Calu3 (cell line): ENCODE measurements at regions of chr17 and their contacts with region 1.

Region 1: DNA sequence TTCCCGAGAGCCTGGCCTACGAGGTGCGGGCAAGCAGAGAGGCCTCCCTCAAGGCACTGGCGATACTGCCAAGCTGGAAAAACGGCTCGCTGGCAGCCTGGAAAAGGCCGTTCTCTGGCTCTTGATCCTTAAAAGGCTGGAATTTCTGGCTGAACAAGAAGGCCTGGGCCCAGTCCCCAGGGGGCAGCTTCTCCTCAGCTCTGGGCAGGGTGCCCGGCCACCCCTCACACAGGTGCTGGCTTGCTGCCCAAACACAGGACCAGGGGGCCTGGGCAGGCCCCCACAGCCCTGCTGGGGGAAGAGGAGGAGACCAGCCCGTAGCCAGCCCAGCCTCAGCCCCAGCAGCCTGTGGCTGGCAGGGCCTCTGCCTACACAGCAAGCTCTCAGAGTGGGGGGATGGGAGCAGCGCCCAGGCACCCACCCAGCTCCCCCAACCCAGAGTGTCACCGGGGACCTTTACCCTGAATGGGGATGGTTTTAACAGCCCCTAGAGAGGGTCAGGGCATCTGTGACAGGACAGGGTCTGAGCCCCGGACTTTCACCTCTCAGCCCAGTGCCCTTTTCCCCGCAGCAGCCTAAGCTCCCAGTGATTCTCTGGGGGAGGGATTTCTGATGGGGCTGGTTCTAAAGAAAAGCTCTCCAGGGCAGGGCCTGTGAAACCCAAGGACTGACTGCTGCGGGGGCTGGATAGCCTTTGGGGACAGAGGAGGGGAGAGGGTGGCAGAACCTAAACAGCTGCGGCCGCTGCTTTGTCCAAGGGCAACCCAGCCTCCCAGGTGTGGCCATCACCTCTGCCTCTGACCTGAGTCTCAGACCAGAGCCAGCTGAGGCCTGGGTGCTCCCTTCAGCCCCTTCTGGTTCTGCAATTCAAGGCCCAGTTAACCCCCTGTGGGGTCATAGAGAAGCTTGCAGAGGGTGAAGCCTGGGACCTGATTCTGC is 38.6 kb upstream of the TOB1 start:
- DNase-seq: peak; percentile 86
- H3K4me3 Mint-ChIP-seq: peak overlapping the region; percentile 38
- H3K27ac Mint-ChIP-seq: peak overlapping the region; percentile 89
- H3K4me1 Mint-ChIP-seq: peaks cover 73% of the 10 kb centered on the region
- H3K27me3 Mint-ChIP-seq: no peaks in the 10 kb centered on the region
- CTCF ChIP-seq: peak; percentile 33

Region 2: GRCh38 chr17:50883850-50884438 is 20.8 kb before region 1 on chr17:
- CTCF ChIA-PET with region 1: interaction called, 11 read pairs
- intact Hi-C with region 1: no loop called
- DNase-seq: peak; percentile 39
- H3K4me3 Mint-ChIP-seq: no peak overlapping the region
- H3K27ac Mint-ChIP-seq: peak overlapping the region; percentile 59
- H3K4me1 Mint-ChIP-seq: peaks cover 44% of the 10 kb centered on the region
- H3K27me3 Mint-ChIP-seq: no peaks in the 10 kb centered on the region
- CTCF ChIP-seq: no peak

Region 3: GRCh38 chr17:50919321-50920085 is 14.7 kb after region 1 on chr17:
- CTCF ChIA-PET with region 1: interaction called, 11 read pairs
- intact Hi-C with region 1: no loop called
- DNase-seq: peak; percentile 99
- H3K4me3 Mint-ChIP-seq: peak overlapping the region; percentile 39
- H3K27ac Mint-ChIP-seq: peak overlapping the region; percentile 96
- H3K4me1 Mint-ChIP-seq: peaks cover 74% of the 10 kb centered on the region
- H3K27me3 Mint-ChIP-seq: no peaks in the 10 kb centered on the region
- CTCF ChIP-seq: no peak

Region 4: DNA sequence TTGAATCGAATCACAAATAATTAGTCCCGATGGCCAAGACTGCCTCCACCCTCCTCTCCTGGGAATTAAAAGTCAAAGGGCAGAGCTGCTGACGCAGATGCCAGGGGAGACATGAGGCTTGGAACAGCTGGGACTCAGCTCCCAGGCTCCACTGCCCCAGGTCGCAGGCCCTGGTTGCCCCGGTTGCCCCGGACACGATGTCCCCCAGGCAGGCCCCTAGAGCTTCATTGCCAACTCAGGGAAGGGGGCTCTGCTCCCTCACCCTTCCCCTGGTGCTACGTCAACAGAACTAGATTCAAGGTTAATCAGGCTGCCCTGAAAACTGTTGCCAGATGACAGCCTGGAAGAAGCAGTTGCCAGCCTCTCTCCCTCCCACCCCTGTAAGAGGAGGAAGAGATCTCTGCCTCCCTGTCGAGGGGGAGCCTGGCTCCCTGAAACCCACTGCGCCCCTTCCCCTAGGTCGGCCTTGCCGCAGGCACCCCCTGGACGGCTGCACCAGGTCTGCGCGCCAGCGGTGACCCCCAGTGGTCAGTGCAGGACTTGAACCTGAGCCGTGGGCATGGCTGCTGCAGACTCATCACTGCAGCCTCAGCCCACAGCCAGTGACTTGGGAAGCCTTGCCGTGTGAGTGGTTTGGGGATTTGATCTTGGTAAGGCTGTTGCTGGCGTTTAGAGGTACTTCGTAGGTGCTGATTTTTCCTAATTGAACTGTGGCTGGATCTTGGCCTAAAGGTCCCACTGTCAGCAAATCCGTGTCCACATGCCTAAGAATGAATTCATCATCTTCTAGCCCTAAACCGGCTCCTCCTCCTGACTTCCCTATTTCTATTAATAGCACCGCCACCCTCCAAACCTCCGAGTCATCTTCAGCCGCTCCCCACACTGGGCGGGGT is 45.4 kb after region 1 on chr17:
- CTCF ChIA-PET with region 1: interaction called, 9 read pairs
- intact Hi-C with region 1: loop called (anchors 1 kb)
- DNase-seq: peak; percentile 89
- H3K4me3 Mint-ChIP-seq: peak overlapping the region; percentile 26
- H3K27ac Mint-ChIP-seq: peak overlapping the region; percentile 19
- H3K4me1 Mint-ChIP-seq: peaks cover 58% of the 10 kb centered on the region
- H3K27me3 Mint-ChIP-seq: no peaks in the 10 kb centered on the region
- CTCF ChIP-seq: peak; percentile 94

Region 5: GRCh38 chr17:50967795-50968194 is 63.0 kb after region 1 on chr17:
- CTCF ChIA-PET with region 1: no interaction called
- intact Hi-C with region 1: no loop called
- DNase-seq: no peak
- H3K4me3 Mint-ChIP-seq: no peak overlapping the region
- H3K27ac Mint-ChIP-seq: no peak overlapping the region
- H3K4me1 Mint-ChIP-seq: no peaks in the 10 kb centered on the region
- H3K27me3 Mint-ChIP-seq: no peaks in the 10 kb centered on the region
- CTCF ChIP-seq: no peak

Region 6: DNA sequence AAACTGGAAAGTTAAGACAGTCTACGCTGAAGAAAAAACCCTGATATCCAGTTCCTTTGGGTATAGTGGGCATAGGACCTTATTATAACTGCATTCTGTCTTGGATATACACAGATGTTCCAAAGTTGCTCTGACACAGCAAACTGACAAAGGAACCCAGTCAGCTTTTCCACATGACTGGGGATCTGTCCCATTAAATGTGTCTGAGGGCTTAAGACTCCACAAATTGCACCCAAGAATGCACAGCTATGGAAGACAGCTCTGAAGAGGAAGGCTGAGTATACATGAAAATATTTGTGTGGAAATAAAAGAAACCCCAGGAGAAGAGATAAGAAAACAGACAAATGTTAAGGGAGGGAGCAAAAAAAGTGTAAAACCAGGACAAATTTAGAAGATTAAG is 101.8 kb after region 1 on chr17:
- CTCF ChIA-PET with region 1: no interaction called
- intact Hi-C with region 1: no loop called
- DNase-seq: no peak
- H3K4me3 Mint-ChIP-seq: no peak overlapping the region
- H3K27ac Mint-ChIP-seq: no peak overlapping the region
- H3K4me1 Mint-ChIP-seq: no peaks in the 10 kb centered on the region
- H3K27me3 Mint-ChIP-seq: no peaks in the 10 kb centered on the region
- CTCF ChIP-seq: no peak